ENCODE measurements at regions of chr11 and their contacts with region 1.

Region 1: DNA sequence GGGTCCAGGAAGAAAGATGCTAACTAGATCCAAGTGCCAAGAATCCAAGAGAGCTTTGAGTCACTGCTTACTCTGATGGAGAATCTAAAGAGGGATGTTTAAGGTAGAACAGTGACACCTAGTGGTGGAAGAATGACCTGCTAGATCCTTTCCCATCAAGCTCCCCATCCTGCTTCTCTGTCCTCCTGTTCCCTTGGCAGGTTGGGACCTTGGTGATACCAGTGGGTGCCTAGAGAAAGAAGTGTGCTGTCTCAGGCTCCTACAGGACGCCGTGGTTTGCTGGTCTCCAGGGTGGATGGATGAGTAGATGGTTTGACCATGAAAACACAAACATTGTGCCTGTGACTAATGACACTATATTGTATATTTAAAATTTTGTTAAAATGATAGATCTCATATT is 383.7 kb downstream of the TMEM135 start:
- DNase-seq: no peak
- H3K4me3 ChIP-seq: no peak overlapping the region
- H3K27me3 ChIP-seq: no peaks in the 10 kb centered on the region
- CTCF ChIP-seq: peak; percentile 72

Region 2: DNA sequence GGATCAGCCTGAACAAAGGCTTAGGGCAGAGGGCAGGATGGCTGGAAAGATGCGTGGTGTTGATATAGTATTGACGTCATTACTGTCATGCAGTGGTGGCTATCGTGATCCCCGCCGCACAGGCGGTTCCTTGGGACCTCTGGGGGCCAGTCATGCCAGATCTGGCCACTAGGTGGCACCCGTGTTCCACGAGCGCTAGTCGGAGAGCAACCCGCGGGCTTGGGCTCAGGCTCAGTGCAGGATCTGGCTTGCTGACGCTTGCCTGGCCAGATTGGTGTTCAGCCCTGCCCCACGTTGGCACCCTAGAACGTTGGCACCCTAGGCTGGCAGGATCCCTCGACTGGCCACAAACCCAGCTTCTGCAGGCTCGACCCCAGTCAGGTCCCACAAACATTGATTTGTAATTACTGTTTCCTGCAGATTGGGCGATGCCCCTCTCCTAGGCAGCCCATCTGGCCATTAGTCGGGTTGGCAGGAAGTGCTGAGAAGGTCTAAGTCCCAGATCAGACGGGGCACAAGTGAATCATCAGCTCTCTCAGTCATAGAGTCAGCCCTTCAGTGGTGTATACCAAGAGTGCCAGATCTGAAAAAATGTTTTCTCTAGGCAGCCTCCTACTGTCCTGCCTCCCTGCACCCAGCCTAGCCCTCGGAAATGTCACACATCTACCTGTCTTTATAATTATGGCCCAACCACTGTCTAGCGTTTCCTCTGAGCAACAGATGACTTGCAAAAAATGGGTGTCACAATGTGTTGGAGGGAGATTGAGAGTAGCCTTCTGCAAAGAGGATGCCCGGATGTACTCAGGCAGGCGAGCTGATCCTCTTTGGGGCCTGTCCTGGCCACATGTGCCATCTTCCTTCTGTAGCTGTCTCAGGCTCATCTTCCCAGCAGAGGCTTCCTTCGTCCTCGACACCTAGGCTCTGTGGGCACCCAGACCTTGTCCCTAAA is 68.4 kb before region 1 on chr11:
- CTCF ChIA-PET with region 1: interaction called, 128 read pairs
- POLR2A ChIA-PET with region 1: no interaction called
- DNase-seq: peak; percentile 13
- H3K4me3 ChIP-seq: no peak overlapping the region
- H3K27me3 ChIP-seq: no peaks in the 10 kb centered on the region; the same call in 1 of the 2 replicates
- CTCF ChIP-seq: peak; percentile 97

Region 3: DNA sequence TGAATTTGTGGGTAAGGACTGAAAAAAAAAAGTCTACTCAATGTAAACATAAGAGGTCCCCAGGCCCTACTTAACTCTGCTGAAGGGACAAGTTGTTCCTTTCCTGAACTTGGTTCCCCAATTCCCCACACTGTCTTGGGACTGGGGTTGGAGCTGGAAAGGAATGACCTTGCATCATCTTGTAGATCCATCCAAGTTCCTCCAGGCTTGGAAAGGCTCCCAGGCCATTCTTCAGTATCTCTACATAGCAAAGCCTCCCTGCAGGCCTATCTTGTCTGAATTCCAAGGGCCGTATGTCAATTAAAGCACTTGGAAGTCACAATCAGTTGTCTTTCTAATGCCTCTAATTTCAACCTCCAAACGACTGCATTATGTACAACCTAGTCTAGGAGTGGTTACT is 22.5 kb before region 1 on chr11:
- CTCF ChIA-PET with region 1: interaction called, 14 read pairs
- POLR2A ChIA-PET with region 1: no interaction called
- DNase-seq: no peak
- H3K4me3 ChIP-seq: no peak overlapping the region
- H3K27me3 ChIP-seq: no peaks in the 10 kb centered on the region
- CTCF ChIP-seq: no peak

Region 4: DNA sequence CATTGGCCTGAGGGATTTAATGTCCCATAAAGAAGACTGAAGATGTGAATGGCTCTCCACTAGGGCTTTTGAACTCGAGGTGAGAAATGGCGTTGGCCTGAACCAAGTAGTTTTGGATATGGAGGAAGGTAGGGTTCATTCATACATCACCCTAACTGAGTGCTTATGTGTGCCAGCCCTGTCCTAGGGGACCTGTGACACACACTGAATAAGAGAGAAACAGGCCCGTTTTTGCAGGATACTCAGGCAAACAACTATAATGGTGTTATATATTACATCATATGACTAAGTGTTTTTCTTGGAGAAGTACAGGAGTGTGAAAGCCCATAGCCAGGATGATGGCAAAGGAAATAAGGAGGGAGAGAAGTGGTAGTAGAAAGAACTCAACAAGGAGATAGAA is 15.6 kb before region 1 on chr11:
- CTCF ChIA-PET with region 1: interaction called, 18 read pairs
- POLR2A ChIA-PET with region 1: no interaction called
- DNase-seq: no peak
- H3K4me3 ChIP-seq: no peak overlapping the region
- H3K27me3 ChIP-seq: no peaks in the 10 kb centered on the region
- CTCF ChIP-seq: no peak

Region 5: GRCh38 chr11:87432022-87432421 is 10.6 kb after region 1 on chr11:
- CTCF ChIA-PET with region 1: interaction called, 20 read pairs
- POLR2A ChIA-PET with region 1: no interaction called
- DNase-seq: peak; percentile 88
- H3K4me3 ChIP-seq: no peak overlapping the region
- H3K27me3 ChIP-seq: no peaks in the 10 kb centered on the region
- CTCF ChIP-seq: no peak

Region 6: DNA sequence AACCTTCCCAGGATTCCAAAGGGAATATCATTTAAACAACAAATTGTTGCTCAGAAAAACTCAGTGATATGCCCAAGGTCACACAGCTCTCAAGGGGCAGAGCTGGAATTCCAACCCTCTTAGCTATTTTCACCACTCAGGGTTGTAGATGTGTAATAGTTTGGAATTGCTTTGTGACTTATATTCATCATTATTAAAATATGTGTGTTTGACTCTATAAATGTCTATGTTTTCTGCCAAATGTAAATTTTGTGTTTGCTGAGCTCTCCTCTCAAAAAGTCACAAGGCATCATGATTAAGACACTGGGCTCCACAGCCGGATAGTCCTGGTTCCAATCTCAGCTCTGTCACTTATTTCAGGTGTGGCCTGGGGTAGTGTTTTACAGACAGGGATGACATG is 23.6 kb after region 1 on chr11:
- CTCF ChIA-PET with region 1: interaction called, 10 read pairs
- POLR2A ChIA-PET with region 1: no interaction called
- DNase-seq: peak; percentile 56
- H3K4me3 ChIP-seq: no peak overlapping the region
- H3K27me3 ChIP-seq: no peaks in the 10 kb centered on the region
- CTCF ChIP-seq: no peak

Measured in BJ (cell line).